ENCODE measurements at regions of chr7 and their contacts with region 1.

Region 1: DNA sequence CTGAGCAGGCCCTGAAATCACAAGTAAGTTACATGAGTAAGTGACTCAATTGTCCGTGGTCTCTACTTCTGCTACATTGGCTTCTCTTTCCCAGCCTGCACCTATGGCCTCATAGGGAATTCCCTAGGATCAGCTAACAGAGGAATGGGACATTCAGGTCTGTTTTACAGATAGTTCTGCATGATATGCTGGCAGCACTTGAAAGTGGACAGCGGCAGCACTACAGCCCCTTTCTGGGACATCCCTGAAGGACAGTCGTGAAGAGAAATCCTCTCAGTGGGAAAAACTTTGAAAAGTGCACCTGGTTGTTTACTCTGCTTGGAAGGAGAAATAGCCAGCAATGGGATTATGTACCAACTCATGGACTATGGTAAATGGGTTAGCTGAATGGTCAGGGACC is 293.1 kb upstream of the CACNA2D1 start:
- DNase-seq: no peak
- CTCF ChIP-seq: no peak

Region 2: DNA sequence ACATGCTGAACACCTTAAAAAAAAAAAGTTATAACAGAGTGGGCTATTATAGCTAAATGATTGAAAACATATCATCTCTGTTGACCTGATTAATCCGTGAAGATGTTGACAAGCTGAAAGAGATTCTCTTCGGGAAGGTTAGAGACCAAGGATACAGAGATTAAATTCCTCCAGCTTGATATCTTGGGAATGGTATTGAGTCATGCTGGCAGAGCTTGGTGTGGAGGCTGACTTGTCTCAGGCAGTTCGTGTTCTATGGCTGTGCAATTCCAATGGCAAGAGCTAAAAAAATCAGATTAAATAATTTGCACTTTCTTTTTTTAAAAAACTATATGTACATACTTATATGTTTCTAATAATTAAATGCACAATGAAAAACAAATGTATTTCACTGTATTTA is 268.2 kb before region 1 on chr7:
- CTCF ChIA-PET with region 1: no interaction called
- POLR2A ChIA-PET with region 1: no interaction called
- DNase-seq: no peak
- CTCF ChIP-seq: no peak

Region 3: DNA sequence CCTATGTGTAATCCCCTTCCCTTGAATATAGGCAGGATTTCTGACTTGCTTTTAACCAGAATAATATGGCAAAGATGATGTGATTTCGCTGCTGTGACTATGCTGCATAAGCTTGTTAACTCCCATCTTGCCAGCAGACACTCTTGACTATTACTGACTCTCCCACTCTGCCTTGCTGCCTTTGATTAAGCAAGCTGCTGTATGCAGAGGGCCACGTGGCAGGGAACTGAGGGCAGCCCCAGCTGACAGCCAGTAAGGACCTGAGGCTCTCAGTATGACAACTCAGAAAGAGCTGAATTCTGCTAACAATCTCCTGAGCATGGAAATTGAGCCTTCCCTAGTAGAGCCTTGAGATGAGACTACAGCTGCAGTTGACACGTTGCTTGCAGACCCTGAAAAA is 13.7 kb before region 1 on chr7:
- CTCF ChIA-PET with region 1: interaction called, 11 read pairs
- POLR2A ChIA-PET with region 1: no interaction called
- DNase-seq: no peak
- CTCF ChIP-seq: no peak

Region 4: GRCh38 chr7:83060218-83060617 is 323.6 kb after region 1 on chr7:
- CTCF ChIA-PET with region 1: no interaction called
- POLR2A ChIA-PET with region 1: no interaction called
- DNase-seq: no peak
- CTCF ChIP-seq: no peak

Measured in GM10248 (cell line).